Endothelial cell of umbilical vein (primary cell): ENCODE measurements at regions of chr7 and their contacts with region 1.

Region 1: DNA sequence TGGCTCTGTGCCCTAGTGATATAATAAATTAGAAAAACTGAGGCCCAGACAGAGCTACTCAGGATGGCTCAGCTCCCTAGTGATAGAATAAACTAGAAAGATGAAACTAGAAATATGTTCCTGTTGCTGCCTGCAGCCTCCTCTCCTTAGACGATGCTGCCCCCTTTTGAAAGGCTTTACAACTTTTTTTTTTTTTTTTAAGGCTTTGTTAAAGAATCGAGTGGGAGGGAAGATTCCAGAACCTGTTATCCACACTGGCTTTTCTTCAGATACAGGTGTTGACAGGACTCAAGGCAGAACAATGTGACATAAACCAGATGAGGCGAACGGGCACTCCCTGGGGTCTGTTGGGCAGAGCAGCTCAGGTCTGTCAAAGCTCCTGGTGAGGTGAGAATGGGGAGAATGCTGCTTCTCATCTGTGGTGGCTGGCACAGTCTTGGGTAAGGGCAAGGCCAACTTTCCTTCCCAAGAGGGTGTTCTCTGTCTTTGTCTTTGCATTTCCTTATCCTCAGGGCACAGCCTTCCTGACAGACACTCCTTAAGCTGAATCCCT is 175.1 kb downstream of the COBL start:
- DNase-seq: peak; percentile 81
- H3K4me3 ChIP-seq: no peak overlapping the region
- H3K27ac ChIP-seq: no peak overlapping the region
- H3K4me1 ChIP-seq: peaks cover 27% of the 10 kb centered on the region
- H3K27me3 ChIP-seq: peaks cover 0 to 2% of the 10 kb centered on the region in 2 experiments
- CTCF ChIP-seq: peak; percentile 48 to 60
- POLR2A ChIP-seq: no peak

Region 2: GRCh38 chr7:50449881-50450589 is 691.5 kb before region 1 on chr7 and contains the start of gene FIGNL1:
- CTCF ChIA-PET with region 1: interaction called, 5 read pairs
- POLR2A ChIA-PET with region 1: no interaction called
- dilution Hi-C with region 1: no loop called
- intact Hi-C with region 1: loop called (anchors 2 kb)
- DNase-seq: peak; percentile 78
- H3K4me3 ChIP-seq: peak within 1 kb of the TSS; percentile 44 to 98 (median 64)
- H3K27ac ChIP-seq: peak within 1 kb of the TSS; percentile 66
- H3K4me1 ChIP-seq: peaks cover 38% of the 10 kb centered on the region
- H3K27me3 ChIP-seq: peaks cover 0 to 5% of the 10 kb centered on the region in 2 experiments
- CTCF ChIP-seq: no peak
- POLR2A ChIP-seq: peak; percentile 79
- total RNA-seq, gene FIGNL1: 37.2 and 49.3 TPM in 2 replicates

Region 3: DNA sequence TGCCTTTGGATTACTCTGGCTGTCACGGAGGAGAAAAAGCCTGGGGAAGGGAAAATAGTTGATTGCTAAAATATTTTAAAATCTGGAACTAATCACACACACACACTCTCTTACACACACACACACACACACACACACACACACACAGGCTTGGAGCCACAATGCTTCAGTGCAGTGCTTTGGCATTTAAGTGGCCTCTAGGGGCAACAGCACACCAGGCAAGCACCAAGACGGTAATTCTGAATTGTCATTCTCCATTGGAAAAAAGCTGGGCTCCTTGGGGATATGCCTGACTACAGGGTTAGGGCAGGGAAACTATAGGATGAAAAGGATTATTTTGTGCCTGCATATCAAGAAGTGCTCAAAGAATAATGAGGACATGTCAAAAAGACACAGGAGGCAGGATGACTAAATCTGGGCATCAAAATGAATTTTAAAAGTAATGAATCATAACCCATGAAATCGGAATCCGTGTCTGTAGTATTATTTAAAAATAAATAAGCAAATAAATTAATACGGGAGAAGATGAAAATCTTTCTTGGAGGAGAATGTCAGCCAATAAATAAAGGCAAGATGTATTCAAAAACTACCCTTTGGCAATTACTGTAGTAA is 545.9 kb before region 1 on chr7:
- CTCF ChIA-PET with region 1: interaction called, 17 read pairs
- POLR2A ChIA-PET with region 1: no interaction called
- dilution Hi-C with region 1: no loop called
- intact Hi-C with region 1: loop called (anchors 5 kb)
- DNase-seq: peak; percentile 29
- H3K4me3 ChIP-seq: no peak overlapping the region
- H3K27ac ChIP-seq: no peak overlapping the region
- H3K4me1 ChIP-seq: peaks cover 3% of the 10 kb centered on the region
- H3K27me3 ChIP-seq: no peaks in the 10 kb centered on the region
- CTCF ChIP-seq: peak; percentile 47 to 55
- POLR2A ChIP-seq: no peak

Region 4: DNA sequence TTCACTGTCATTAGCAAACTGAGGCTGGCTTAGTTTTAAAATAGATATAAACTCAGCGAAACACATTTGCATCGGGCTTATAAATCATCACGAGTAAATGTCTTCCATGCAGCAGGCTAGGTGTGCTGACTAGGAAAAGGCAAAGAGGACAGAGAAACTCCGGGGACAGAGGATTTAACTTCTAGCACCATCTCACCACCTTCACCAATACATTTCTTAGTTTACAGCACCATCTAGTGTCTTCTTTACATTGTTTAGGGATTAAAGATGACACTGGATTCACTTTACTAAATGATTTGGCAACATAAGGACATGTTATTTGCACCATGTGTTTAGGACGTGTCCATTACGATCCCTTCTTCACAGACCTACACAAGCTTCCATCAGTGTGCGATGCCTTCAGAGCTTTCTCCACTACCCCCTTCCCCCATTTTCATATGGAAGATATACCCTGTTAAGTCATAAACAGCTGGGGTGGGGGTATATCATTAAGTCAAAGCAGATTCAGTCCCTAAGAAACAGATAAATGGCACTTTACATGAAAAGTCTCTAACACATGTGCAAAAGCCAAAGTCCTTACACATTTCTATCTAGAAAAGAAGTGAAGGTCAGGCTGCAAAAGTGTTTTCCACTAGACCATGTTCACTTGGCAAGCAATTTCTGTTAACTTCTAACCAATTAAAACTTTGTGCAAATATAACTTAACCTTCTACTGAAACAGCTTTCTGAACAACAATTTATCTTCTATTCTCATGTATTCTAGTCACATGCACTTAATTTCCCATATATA is 462.1 kb before region 1 on chr7:
- CTCF ChIA-PET with region 1: interaction called, 19 read pairs
- POLR2A ChIA-PET with region 1: no interaction called
- dilution Hi-C with region 1: no loop called
- intact Hi-C with region 1: loop called (anchors 1 kb)
- DNase-seq: peak; percentile 41
- H3K4me3 ChIP-seq: no peak overlapping the region
- H3K27ac ChIP-seq: no peak overlapping the region
- H3K4me1 ChIP-seq: peaks cover 15% of the 10 kb centered on the region
- H3K27me3 ChIP-seq: no peaks in the 10 kb centered on the region
- CTCF ChIP-seq: peak in 1 of 2 donors; percentile 5
- POLR2A ChIP-seq: no peak

Region 5: DNA sequence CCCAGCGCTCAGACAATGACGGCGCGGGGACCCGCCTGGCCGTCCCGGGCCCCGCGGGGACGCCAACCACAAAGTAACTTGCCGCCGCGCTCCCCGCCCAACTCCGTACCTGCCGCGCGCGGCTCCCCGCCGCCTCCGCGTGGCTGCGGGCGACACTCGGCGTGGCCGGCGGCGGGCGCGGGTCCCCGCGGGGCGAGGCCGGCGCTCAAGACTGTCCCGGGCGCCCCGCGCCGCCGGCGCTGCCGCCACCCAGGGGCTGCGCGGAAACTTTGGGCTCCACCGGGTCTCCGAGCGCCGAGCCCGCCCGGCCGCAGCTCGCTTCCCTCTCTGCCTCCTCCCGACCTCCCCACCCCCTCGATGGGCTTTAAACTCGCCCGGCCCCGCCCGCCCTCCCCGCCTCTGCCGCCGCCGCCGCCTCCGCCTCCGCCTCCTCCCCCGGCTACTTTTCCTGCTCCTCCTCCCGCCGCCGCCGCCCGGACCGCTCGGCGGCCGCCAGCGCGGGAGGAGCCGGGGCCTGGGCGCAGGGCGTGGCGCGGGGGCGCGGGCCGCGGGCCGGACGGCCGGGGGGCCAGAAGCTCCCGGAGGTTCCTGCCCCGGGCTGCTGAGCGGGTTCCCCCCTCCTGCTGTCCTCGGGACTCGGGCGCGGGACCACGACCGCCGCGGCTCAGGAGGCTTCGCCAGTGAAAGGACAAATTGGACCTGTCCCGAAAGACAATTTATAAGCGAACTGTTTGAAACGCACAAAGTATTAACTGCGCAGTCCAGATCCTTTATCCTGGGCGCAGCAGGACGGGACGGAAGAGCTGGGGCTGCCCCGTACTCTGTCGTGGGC is 348.2 kb before region 1 on chr7:
- CTCF ChIA-PET with region 1: interaction called, 18 read pairs
- POLR2A ChIA-PET with region 1: no interaction called
- dilution Hi-C with region 1: no loop called
- intact Hi-C with region 1: loop called (anchors 1 kb)
- DNase-seq: peak; percentile 50
- H3K4me3 ChIP-seq: peak overlapping the region; percentile 40 to 91 (median 52)
- H3K27ac ChIP-seq: peak overlapping the region; percentile 77
- H3K4me1 ChIP-seq: peaks cover 24% of the 10 kb centered on the region
- H3K27me3 ChIP-seq: no peaks in the 10 kb centered on the region
- CTCF ChIP-seq: no peak
- POLR2A ChIP-seq: peak; percentile 73

Region 6: GRCh38 chr7:51075681-51076580 is 65.6 kb before region 1 on chr7:
- CTCF ChIA-PET with region 1: interaction called, 54 read pairs
- POLR2A ChIA-PET with region 1: no interaction called
- dilution Hi-C with region 1: no loop called
- intact Hi-C with region 1: loop called (anchors 1 kb)
- DNase-seq: peak; percentile 91
- H3K4me3 ChIP-seq: no peak overlapping the region
- H3K27ac ChIP-seq: peak overlapping the region; percentile 43
- H3K4me1 ChIP-seq: peaks cover 16% of the 10 kb centered on the region
- H3K27me3 ChIP-seq: peaks cover 0 to 2% of the 10 kb centered on the region in 2 experiments
- CTCF ChIP-seq: no peak
- POLR2A ChIP-seq: no peak